Lower leg skin (tissue), 4 donors: ENCODE measurements at regions of chr2 and their contacts with region 1.

Region 1: GRCh38 chr2:70964596-70965386 is 13.6 kb upstream of the ANKRD53 start:
- DNase-seq: peak; percentile 35 to 95
- H3K4me3 ChIP-seq: no peak overlapping the region
- CTCF ChIP-seq: peak in 1 of 3 donors; percentile 29
- POLR2A ChIP-seq: no peak

Region 2: DNA sequence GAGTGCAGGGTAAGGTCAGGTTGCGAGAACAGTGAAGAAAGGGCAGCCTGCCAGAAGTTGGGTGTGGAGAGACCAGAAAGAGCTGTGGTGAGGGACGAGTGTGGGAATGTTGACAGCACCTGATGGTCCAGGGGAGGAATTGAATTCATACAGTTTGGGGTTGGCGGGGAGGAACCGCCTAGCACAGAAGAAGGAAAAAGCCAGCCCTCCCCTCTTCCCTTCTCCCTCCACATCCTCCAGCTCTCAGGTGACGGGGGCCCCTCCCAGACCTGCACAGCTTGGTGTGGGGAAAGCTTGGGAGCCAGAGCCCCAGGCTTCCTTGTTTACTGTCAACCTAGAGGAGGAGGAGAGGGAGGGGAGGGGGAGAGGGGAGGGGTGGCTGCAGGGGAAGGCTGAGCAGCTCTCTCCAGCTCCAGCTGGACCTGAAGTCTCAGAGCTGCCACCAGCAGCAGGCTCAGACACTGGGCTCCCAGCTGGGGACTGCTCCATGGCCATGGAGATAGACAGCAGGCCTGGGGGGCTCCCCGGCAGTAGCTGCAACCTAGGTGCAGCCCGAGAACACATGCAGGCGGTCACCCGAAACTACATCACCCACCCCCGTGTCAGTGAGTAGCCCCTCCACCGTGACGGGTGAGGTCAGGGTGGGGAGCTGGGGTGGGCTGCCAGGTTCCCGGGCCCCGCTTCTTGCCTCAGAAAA is 29.2 kb before region 1 on chr2 and contains the start of gene ATP6V1B1:
- intact Hi-C with region 1: no loop called
- DNase-seq: peak in 1 of 2 donors; percentile 82
- H3K4me3 ChIP-seq: no peak within 1 kb of the TSS
- CTCF ChIP-seq: no peak
- POLR2A ChIP-seq: no peak
- total RNA-seq, gene ATP6V1B1: 7.3 to 110 (median 55.0) TPM

Region 3: DNA sequence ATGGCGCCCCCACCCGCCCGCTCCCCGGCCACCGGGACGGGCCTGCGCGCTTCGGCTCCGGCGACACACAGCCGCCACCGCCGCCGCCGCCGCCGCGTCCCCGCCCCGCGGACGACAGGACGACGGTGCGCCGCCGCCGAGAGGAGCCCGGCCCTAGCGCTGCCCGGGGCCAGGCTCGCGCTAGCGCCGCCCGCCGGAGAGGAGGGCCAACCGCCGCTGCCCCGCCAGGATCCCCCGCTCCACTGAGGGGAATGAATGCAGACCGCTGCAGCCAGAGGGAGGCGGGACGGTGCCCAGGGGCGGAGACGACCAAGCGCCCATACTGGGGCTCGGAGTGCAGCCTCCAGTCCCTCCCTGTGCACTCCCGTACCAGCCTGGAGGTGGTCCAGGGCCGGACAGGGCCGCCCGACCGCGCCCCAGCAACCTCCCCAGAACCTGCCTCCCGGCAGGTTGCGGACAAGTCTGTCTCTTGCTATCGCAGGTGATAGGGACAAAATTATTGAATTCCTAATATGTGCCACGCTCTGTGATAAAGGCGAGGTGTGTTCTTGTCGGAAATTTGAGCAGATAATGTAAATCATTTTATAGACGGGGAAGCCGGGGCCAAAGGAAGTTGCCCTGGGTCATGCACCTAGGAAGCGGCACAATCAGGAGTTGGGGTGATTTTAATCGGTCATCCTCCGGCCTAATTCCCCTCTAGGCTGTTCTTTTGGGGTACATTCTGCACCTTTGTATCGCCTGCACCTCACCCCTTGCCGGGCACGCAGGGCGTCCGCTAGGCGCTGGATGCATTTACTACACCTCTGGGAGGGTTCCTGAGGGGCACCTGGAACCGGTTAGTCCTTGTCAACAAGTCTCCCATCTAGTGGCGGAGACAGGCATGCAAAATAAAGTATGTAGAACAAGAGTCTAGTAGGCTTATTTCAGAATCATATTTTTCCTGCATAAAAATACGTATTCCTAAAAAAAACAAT is 30.3 kb after region 1 on chr2 and contains the start of gene TEX261:
- intact Hi-C with region 1: loop called (anchors 2 kb)
- DNase-seq: peak; percentile 78 to 97
- H3K4me3 ChIP-seq: peak within 1 kb of the TSS; percentile 82
- CTCF ChIP-seq: no peak
- POLR2A ChIP-seq: no peak
- total RNA-seq, gene TEX261: 12.5 to 24.9 (median 20.7) TPM